T-cell (primary cell): ENCODE measurements at regions of chr11 and their contacts with region 1.

Region 1: GRCh38 chr11:34732831-34733230 is 111.9 kb downstream of the EHF start:
- DNase-seq: no peak
- ATAC-seq: no peak
- H3K4me3 ChIP-seq: no peak overlapping the region
- H3K4me3 Mint-ChIP-seq: no peak overlapping the region
- H3K27ac ChIP-seq: no peak overlapping the region
- H3K27ac Mint-ChIP-seq: no peak overlapping the region
- H3K4me1 ChIP-seq: no peaks in the 10 kb centered on the region
- H3K4me1 Mint-ChIP-seq: no peaks in the 10 kb centered on the region
- H3K27me3 ChIP-seq: peaks cover 4 to 14% of the 10 kb centered on the region in 2 experiments
- H3K27me3 Mint-ChIP-seq: peaks cover 29 to 40% of the 10 kb centered on the region in 2 donors

Region 2: DNA sequence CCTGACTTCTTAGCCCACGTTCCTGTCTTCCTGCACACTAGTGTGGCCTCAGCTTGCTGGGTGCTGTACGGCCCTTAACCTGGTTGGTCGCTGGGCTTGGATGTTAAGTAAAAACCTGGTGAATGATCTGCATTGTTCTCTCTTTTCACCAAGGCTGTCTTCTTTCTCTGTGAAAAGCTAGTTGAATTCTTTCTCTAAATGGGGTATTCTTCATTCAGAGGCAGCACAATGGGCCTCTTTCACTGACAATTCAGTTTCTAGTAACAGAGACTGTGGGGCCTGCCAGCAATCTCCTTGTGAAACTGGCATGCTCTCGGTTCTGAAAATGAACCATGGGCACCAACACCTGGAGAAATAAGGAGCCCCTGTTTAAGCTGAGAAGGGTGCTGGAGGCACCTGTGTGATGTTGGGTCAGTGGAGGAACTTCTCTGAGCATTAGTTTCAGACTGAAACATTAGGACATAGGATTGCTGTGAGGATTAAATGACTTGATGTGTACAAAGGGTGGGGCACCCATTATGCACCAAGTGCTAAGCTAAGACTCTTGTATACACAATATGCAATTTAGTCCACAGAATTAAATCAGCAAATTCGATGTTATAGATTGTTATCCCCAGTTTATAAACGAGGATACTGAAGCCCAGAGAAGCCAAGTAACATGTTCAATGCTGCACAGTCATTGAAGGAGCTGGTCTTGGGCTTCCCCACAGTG is 186.2 kb before region 1 on chr11:
- CTCF ChIA-PET with region 1: no interaction called
- POLR2A ChIA-PET with region 1: no interaction called
- DNase-seq: no peak
- ATAC-seq: no peak
- H3K4me3 ChIP-seq: no peak overlapping the region
- H3K4me3 Mint-ChIP-seq: no peak overlapping the region
- H3K27ac ChIP-seq: no peak overlapping the region
- H3K27ac Mint-ChIP-seq: no peak overlapping the region
- H3K4me1 ChIP-seq: no peaks in the 10 kb centered on the region
- H3K4me1 Mint-ChIP-seq: no peaks in the 10 kb centered on the region
- H3K27me3 ChIP-seq: peaks cover 0 to 18% of the 10 kb centered on the region in 2 experiments
- H3K27me3 Mint-ChIP-seq: peaks cover 27 to 34% of the 10 kb centered on the region in 2 donors

Region 3: DNA sequence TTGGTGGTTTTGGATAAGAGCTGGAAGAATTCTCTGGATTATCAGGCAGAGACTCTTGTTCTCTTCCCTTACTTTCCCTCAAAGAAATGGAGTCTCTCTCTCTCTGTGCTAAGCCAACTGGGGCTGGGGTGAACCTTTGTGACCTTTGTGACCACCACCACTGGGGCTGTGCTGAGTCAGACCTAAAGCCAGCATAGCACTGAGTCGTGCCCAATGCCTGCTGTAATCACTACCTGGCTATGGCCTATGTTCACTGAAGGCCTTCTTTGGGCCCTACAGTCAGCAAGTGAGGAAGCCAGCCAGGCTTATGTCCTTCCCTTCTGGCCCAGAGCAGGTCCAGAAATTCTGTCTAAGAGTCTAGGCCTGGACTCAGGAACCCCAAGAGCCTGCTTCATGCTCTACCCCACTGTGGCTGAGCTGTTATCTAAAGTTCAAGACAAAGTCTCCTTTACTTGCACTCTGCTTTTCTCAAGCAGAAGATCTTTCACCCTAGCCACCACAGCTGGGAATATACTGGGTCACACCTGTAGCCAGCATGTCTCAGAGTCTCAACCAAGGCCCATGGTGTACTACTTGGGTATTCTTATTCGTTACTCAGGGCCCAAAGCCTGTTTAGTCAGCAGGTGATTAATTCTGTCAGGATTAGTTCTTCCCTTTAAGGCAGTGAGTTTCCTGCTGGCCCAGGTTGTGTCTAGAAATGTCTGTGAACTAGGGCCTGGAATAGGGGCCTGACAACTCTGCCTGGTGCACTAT is 25.9 kb before region 1 on chr11:
- CTCF ChIA-PET with region 1: no interaction called
- POLR2A ChIA-PET with region 1: no interaction called
- DNase-seq: no peak
- ATAC-seq: no peak
- H3K4me3 ChIP-seq: no peak overlapping the region
- H3K4me3 Mint-ChIP-seq: no peak overlapping the region
- H3K27ac ChIP-seq: no peak overlapping the region
- H3K27ac Mint-ChIP-seq: no peak overlapping the region
- H3K4me1 ChIP-seq: no peaks in the 10 kb centered on the region
- H3K4me1 Mint-ChIP-seq: no peaks in the 10 kb centered on the region
- H3K27me3 ChIP-seq: peaks cover 0 to 5% of the 10 kb centered on the region in 2 experiments
- H3K27me3 Mint-ChIP-seq: peaks cover 3 to 11% of the 10 kb centered on the region in 2 donors

Region 4: DNA sequence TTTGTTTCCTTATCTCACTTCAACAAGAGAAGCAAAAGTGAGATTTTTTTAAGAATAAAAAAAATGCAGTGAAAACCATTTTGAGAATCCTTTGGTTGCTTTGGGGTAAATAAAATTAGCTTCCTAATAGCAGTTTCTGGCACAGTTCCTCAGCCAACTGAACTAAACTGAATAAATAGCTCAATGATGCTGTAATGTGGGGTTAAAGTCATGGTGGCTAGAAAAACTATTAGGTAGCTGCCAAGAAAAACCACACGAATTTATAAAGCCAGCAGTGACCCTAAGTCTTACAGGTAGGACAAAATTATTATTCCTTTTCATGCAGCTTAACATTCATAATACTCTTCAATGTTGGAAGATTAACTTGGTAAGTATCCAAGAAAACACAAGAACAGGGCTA is 41.0 kb after region 1 on chr11:
- CTCF ChIA-PET with region 1: interaction called in 1 of 2 experiments, 10 read pairs
- POLR2A ChIA-PET with region 1: no interaction called
- DNase-seq: no peak
- ATAC-seq: no peak
- H3K4me3 ChIP-seq: no peak overlapping the region
- H3K4me3 Mint-ChIP-seq: no peak overlapping the region
- H3K27ac ChIP-seq: no peak overlapping the region
- H3K27ac Mint-ChIP-seq: no peak overlapping the region
- H3K4me1 ChIP-seq: no peaks in the 10 kb centered on the region
- H3K4me1 Mint-ChIP-seq: no peaks in the 10 kb centered on the region
- H3K27me3 ChIP-seq: peaks cover 0 to 21% of the 10 kb centered on the region in 2 experiments
- H3K27me3 Mint-ChIP-seq: peaks cover 19 to 31% of the 10 kb centered on the region in 2 donors

Region 5: GRCh38 chr11:35050541-35050995 is 317.7 kb after region 1 on chr11:
- CTCF ChIA-PET with region 1: no interaction called
- POLR2A ChIA-PET with region 1: no interaction called
- DNase-seq: peak in 1 of 35 experiments; percentile 19
- ATAC-seq: no peak
- H3K4me3 ChIP-seq: peak overlapping the region in 1 of 2 donors; percentile 47
- H3K4me3 Mint-ChIP-seq: peak overlapping the region; percentile 61 to 77 (median 67)
- H3K27ac ChIP-seq: no peak overlapping the region
- H3K27ac Mint-ChIP-seq: peak overlapping the region; percentile 79 to 95
- H3K4me1 ChIP-seq: peaks cover 39 to 58% of the 10 kb centered on the region in 2 experiments
- H3K4me1 Mint-ChIP-seq: peaks cover 69 to 70% (median 70%) of the 10 kb centered on the region in 3 donors
- H3K27me3 ChIP-seq: no peaks in the 10 kb centered on the region
- H3K27me3 Mint-ChIP-seq: no peaks in the 10 kb centered on the region